Activated CD4-positive, alpha-beta T cell treated with anti-CD3 and anti-CD28 coated beads for 36 hours (primary cell): ENCODE measurements at regions of chr20 and their contacts with region 1.

Region 1: DNA sequence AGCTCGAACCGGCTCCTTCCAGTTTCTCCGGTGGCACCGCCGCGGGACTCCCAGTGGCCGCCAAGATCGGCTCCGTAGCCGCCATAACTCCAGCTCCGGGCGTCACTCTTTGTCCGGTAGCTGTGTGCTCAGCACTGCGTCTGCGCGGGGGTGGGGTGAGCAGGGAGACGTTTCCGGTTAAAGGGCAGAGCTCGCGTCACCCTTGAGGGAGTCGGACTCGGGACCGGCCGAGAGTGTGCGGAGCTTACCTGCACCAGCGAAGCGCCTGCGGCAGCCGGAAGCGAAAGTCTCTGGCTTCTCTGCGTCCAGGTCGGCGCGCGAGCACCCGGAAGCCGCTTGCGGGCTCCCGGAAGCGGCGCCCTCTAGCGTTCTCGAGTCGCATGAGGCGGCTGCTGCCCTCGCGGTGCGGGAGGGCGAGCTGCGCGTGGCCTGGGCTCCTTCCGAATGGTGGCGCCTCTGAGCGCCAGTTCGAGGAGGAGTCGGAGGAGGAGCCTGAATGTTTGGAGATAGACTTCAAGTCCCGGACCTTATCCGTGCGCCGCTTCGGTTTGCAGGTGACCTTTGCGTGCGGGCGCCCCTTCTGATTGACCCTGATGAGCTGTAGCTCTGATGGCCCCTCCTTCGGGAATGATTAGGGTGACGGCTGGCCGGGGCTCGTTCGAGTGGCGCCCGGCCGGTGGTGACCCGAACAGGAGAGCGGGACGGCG is at the start of gene SCAND1:
- DNase-seq: peak; percentile 99
- ATAC-seq: peak; percentile 91
- H3K4me3 Mint-ChIP-seq: peak within 1 kb of the TSS; percentile 97
- H3K27ac Mint-ChIP-seq: peak within 1 kb of the TSS; percentile 100
- H3K4me1 Mint-ChIP-seq: peaks cover 11% of the 10 kb centered on the region
- H3K27me3 Mint-ChIP-seq: no peaks in the 10 kb centered on the region
- total RNA-seq, gene SCAND1: 37.8 to 39.3 TPM

Region 2: DNA sequence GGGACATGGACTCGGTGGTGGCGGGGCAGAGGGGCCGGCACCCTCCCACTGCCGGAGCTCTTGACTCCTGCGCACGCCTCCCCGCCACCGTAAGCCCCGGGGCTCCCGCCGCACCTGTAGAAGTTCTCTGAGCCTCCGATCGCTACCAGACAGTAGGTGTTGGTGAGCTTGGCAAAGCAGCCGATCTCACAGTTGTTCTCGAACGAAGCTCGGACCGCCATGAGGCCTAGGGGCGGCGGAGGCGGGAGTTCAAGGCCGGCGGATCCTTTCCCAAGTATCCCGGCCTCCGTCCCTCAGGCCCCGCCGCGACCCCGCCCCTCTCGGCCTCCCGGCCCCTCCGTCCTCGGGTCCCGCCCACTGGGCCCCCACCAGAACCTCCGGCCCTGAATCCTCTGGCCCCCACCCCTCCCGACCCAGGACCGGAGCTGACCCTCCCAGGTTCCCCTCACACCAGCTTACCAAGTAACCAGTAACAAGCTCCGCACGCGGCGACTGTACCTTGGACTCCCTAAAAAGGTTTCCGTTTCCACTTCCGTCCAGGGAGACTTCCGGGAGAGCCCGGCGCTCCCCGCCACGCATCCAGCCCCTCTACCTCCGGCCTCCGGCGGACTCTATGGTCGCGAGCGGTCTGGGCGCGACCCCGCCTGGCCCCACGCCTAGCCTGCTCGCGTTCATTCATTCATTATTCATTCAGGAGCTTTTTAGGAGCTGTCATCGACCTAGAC is 669.9 kb before region 1 on chr20 and contains the start of gene EIF6:
- CTCF ChIA-PET with region 1: interaction called, 3 read pairs
- POLR2A ChIA-PET with region 1: interaction called, 3 read pairs
- intact Hi-C with region 1: loop called in 1 of 2 experiments (anchors 2 kb)
- DNase-seq: peak; percentile 88
- ATAC-seq: peak; percentile 85
- H3K4me3 Mint-ChIP-seq: peak within 1 kb of the TSS; percentile 81
- H3K27ac Mint-ChIP-seq: peak within 1 kb of the TSS; percentile 91
- H3K4me1 Mint-ChIP-seq: peaks cover 23% of the 10 kb centered on the region
- H3K27me3 Mint-ChIP-seq: no peaks in the 10 kb centered on the region
- total RNA-seq, gene EIF6: 110 to 124 TPM

Region 3: GRCh38 chr20:35601008-35601973 is 353.1 kb before region 1 on chr20:
- CTCF ChIA-PET with region 1: no interaction called
- POLR2A ChIA-PET with region 1: interaction called, 8 read pairs
- intact Hi-C with region 1: loop called in 1 of 2 experiments (anchors 1 kb)
- DNase-seq: peak; percentile 91
- ATAC-seq: peak; percentile 94
- H3K4me3 Mint-ChIP-seq: peak overlapping the region; percentile 58
- H3K27ac Mint-ChIP-seq: peak overlapping the region; percentile 49
- H3K4me1 Mint-ChIP-seq: peaks cover 5% of the 10 kb centered on the region
- H3K27me3 Mint-ChIP-seq: peaks cover 23% of the 10 kb centered on the region

Region 4: GRCh38 chr20:35629427-35630145 is 324.8 kb before region 1 on chr20:
- CTCF ChIA-PET with region 1: no interaction called
- POLR2A ChIA-PET with region 1: no interaction called
- intact Hi-C with region 1: no loop called
- DNase-seq: no peak
- ATAC-seq: no peak
- H3K4me3 Mint-ChIP-seq: no peak overlapping the region
- H3K27ac Mint-ChIP-seq: no peak overlapping the region
- H3K4me1 Mint-ChIP-seq: no peaks in the 10 kb centered on the region
- H3K27me3 Mint-ChIP-seq: no peaks in the 10 kb centered on the region

Region 5: GRCh38 chr20:35741892-35742740 is 212.2 kb before region 1 on chr20 and contains the start of gene RBM39:
- CTCF ChIA-PET with region 1: interaction called, 16 read pairs
- POLR2A ChIA-PET with region 1: interaction called, 28 read pairs
- intact Hi-C with region 1: loop called (anchors 1 kb)
- DNase-seq: peak; percentile 100
- ATAC-seq: peak; percentile 88
- H3K4me3 Mint-ChIP-seq: peak within 1 kb of the TSS; percentile 90
- H3K27ac Mint-ChIP-seq: peak within 1 kb of the TSS; percentile 100
- H3K4me1 Mint-ChIP-seq: peaks cover 45% of the 10 kb centered on the region
- H3K27me3 Mint-ChIP-seq: no peaks in the 10 kb centered on the region
- total RNA-seq, gene RBM39: 303 to 356 TPM

Region 6: DNA sequence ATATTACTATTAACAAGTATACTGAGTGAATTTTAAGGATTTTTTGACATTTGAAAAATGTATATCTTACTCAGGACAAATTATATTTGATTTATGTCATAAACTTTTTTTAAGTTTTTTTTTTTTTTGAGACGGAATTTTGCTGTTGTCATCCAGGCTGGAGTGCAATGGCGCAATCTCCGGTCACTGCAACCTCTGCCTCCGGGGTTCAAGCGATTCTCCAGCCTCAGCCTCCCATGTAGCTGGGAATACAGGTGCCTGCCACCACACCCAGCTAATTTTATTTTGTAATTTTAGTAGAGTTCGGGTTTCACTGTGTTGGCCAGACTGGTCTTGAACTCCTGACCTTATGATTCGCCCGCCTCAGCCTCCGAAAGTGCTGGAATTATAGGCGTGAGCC is 138.0 kb before region 1 on chr20:
- CTCF ChIA-PET with region 1: no interaction called
- POLR2A ChIA-PET with region 1: no interaction called
- intact Hi-C with region 1: no loop called
- DNase-seq: no peak
- ATAC-seq: no peak
- H3K4me3 Mint-ChIP-seq: no peak overlapping the region
- H3K27ac Mint-ChIP-seq: no peak overlapping the region
- H3K4me1 Mint-ChIP-seq: peaks cover 22% of the 10 kb centered on the region
- H3K27me3 Mint-ChIP-seq: no peaks in the 10 kb centered on the region

Region 7: DNA sequence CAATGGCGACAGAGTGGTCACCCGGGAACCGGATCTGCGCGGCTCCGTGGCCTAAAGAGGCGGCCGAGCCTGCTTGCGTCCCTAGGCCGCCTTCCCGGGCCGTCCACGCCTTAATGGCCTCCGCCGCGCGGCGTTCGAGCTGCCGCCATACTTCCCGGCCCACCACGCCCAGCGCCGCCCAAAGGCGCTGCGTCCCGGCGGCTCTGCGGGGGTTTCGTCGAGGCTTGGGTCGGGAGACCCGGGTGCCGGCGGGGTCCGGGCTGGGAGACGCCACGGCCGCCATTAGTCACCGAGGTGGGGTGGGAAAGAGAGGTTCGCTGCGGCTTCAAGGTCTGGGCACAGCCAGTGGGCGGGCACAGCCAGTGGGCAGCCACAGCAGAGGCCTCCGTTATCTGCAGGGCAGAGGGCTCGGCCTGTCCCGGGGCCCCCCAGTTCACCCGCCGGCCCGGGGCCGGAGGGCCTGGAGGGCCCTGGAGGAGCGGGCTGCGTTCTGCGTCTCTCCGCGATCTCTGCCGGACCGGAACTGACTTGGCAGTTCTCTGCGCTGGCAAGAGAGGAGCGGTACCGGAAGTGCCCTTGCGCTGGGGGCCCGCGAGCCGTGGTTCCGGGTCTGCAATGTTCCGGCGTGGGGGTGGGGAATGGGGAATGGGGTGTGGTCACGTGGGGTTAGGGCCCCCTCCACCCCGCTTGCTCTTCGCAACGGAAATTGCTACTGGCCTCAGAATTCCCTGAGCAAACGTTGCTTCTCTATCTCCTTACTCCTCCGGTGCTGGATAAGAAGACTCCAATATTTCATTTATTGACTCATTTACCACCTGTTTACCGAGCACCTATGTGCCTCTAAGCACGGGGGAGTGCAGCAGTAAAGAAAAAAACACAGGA is 96.3 kb after region 1 on chr20:
- CTCF ChIA-PET with region 1: no interaction called
- POLR2A ChIA-PET with region 1: interaction called, 3 read pairs
- intact Hi-C with region 1: loop called in 1 of 2 experiments (anchors 1 kb)
- DNase-seq: peak; percentile 95
- ATAC-seq: peak; percentile 98
- H3K4me3 Mint-ChIP-seq: peak overlapping the region; percentile 96
- H3K27ac Mint-ChIP-seq: peak overlapping the region; percentile 91
- H3K4me1 Mint-ChIP-seq: peaks cover 34% of the 10 kb centered on the region
- H3K27me3 Mint-ChIP-seq: no peaks in the 10 kb centered on the region

Region 8: DNA sequence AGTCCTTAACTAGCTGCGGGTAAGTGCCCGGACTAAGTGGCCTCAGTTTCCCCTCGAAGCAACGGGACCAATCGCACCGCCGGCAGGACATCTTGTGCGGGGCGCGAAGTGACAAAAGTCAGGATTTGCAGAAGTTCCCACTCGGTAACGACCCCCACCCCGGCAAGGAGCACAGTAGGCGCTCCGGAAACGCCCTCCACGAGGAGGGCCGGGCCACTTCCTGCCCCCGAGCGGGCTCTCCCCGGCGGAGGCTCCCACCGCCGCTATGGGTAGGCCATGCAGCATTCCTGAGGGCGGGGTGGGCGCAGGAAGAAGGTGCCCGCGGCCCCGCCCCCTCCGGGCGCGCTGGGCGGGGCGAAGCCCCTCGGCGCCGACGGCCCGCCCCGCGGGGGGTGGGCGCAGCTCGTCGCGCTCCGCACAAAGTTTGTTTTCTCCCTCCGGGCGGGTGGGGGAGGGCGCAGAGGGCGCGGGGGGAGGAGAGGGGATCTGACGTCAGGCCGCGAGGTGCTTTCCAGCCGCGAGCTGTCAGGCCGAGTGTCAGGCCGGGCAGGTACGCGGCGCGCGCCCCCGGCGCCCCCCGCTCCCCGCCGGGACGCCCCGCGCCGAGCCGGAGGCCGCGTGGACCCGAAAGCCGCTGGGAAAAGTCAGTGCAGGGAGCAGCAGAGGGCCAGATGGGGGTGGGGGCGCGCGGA is 618.9 kb after region 1 on chr20 and contains the start of gene TGIF2:
- CTCF ChIA-PET with region 1: no interaction called
- POLR2A ChIA-PET with region 1: no interaction called
- intact Hi-C with region 1: loop called in 1 of 2 experiments (anchors 1 kb)
- DNase-seq: peak; percentile 95
- ATAC-seq: peak; percentile 75
- H3K4me3 Mint-ChIP-seq: peak within 1 kb of the TSS; percentile 88
- H3K27ac Mint-ChIP-seq: peak within 1 kb of the TSS; percentile 93
- H3K4me1 Mint-ChIP-seq: peaks cover 35% of the 10 kb centered on the region
- H3K27me3 Mint-ChIP-seq: no peaks in the 10 kb centered on the region
- total RNA-seq, gene TGIF2: 44.9 to 48.7 TPM

Region 9: GRCh38 chr20:37095599-37096414 is 1141.5 kb after region 1 on chr20 and contains the start of gene RBL1:
- CTCF ChIA-PET with region 1: no interaction called
- POLR2A ChIA-PET with region 1: interaction called, 3 read pairs
- intact Hi-C with region 1: loop called in 1 of 2 experiments (anchors 2 kb)
- DNase-seq: peak; percentile 94
- ATAC-seq: peak; percentile 83
- H3K4me3 Mint-ChIP-seq: peak within 1 kb of the TSS; percentile 95
- H3K27ac Mint-ChIP-seq: peak within 1 kb of the TSS; percentile 100
- H3K4me1 Mint-ChIP-seq: peaks cover 26% of the 10 kb centered on the region
- H3K27me3 Mint-ChIP-seq: no peaks in the 10 kb centered on the region
- total RNA-seq, gene RBL1: 39.5 to 43.2 TPM